Kidney (tissue), 22 donors: ENCODE measurements at regions of chr3 and their contacts with region 1.

Region 1: GRCh38 chr3:184505076-184505878 is 56.3 kb upstream of the EPHB3 start:
- DNase-seq: peak in 1 of 5 donors; percentile 37
- H3K4me3 ChIP-seq: no peak overlapping the region
- H3K27ac ChIP-seq: no peak overlapping the region
- H3K4me1 ChIP-seq: no peaks in the 10 kb centered on the region
- H3K27me3 ChIP-seq: no peaks in the 10 kb centered on the region
- CTCF ChIP-seq: no peak

Region 2: GRCh38 chr3:184417619-184418327 is 87.5 kb before region 1 on chr3:
- intact Hi-C with region 1: loop called (anchors 10 kb)
- DNase-seq: peak; percentile 50 to 87 (median 60)
- H3K4me3 ChIP-seq: no peak overlapping the region
- H3K27ac ChIP-seq: no peak overlapping the region
- H3K4me1 ChIP-seq: peaks cover 0 to 6% (median 4%) of the 10 kb centered on the region in 3 donors
- H3K27me3 ChIP-seq: no peaks in the 10 kb centered on the region
- CTCF ChIP-seq: peak; percentile 88